ENCODE measurements at regions of chr3 and their contacts with region 1.

Region 1: GRCh38 chr3:33787328-33788009 is 11.0 kb upstream of the PDCD6IP start:
- DNase-seq: peak; percentile 58
- H3K4me3 ChIP-seq: no peak overlapping the region
- H3K27ac ChIP-seq: no peak overlapping the region
- H3K4me1 ChIP-seq: peaks cover 31% of the 10 kb centered on the region
- H3K27me3 ChIP-seq: no peaks in the 10 kb centered on the region
- CTCF ChIP-seq: peak; percentile 83 to 94

Region 2: DNA sequence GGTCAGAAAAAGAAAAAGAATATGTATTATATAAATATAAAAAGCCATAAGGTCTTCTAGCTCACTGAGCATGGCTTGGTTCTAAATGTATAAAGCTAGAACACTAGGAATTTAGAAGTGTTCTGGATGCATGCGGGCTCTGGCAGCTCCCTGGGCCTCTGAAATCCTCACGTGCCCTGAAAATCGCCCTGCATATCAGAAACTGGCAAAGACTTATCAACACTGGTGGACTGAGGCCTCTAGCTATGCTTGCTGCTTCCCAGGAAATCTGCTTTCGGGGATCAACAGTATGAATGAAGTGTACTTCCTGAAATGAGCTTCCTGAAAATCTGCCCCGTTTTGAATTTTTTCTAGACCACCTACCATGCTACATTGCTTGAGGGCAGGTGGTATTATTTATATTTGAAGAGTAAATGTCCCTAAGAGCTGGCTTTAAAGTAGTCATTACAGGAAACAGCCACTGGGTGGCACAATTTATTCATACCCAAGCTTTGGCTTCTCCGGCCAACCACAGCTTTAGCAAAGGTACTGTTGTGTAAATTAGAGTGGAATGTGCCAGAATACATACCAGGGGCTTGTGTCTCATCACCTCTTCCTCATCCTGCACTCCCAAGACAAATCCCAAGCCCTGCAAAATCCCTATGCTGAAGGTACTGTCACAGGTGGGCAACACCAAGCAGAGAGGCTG is 656.0 kb before region 1 on chr3:
- CTCF ChIA-PET with region 1: interaction called, 9 read pairs
- dilution Hi-C with region 1: loop called (anchors 25 kb)
- in situ Hi-C with region 1: no loop called
- intact Hi-C with region 1: loop called (anchors 5 kb)
- DNase-seq: peak; percentile 52
- H3K4me3 ChIP-seq: no peak overlapping the region
- H3K27ac ChIP-seq: no peak overlapping the region
- H3K4me1 ChIP-seq: no peaks in the 10 kb centered on the region
- H3K27me3 ChIP-seq: no peaks in the 10 kb centered on the region
- CTCF ChIP-seq: peak; percentile 52 to 71

Region 3: DNA sequence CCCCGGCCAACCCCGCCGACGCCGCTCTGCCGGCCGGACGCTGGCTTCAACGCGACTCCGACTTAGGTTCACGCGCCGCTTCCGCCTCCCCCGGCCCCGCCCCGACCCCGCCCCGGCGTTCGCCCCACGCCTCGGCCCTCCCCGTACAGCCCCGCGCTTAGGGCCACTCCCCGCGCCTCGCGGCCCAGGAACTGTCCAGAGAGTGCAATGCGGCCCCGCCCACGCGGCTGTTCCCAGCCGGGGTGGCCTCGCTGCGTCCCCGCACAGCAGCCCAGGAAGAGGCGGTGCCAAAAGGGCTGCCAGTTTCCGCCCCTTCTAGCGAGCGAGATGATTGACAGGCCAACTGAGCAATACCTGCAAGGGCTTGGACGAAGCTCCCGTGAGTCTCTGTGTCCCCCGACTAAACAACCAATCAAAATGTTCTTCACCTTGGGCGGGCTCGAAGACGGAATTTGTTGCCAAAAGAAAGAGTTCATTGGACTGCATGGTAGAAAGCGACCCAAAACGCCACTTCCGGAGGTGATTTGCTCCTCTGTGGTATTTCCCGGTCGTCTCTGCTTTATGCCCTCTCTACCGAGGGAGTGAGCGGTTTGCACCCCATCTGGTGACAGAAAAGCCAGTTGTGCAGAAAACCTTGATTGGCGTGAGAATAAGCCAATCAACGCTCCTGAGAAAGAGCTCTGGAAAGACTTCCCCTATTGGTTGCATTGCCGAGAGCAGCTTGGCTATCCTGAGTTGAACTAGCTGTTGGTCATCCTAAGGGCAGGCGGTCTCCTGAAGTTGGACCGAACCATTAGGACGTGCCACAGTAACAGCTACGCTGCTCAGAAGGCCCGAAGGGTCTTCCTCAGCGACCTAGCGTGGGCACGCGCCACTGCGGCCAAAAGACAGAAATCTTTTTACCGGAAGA is 346.9 kb before region 1 on chr3 and contains the start of gene UBP1:
- CTCF ChIA-PET with region 1: no interaction called
- dilution Hi-C with region 1: no loop called
- in situ Hi-C with region 1: loop called in 1 of 2 experiments (anchors 25 kb)
- intact Hi-C with region 1: loop called (anchors 5 kb)
- DNase-seq: peak; percentile 100
- H3K4me3 ChIP-seq: peak within 1 kb of the TSS; percentile 86 to 93 (median 88)
- H3K27ac ChIP-seq: peak within 1 kb of the TSS; percentile 83
- H3K4me1 ChIP-seq: peaks cover 19% of the 10 kb centered on the region
- H3K27me3 ChIP-seq: no peaks in the 10 kb centered on the region
- CTCF ChIP-seq: no peak
- total RNA-seq, gene UBP1: 44.8 to 63.7 TPM

Region 4: GRCh38 chr3:33636125-33636850 is 151.2 kb before region 1 on chr3:
- CTCF ChIA-PET with region 1: interaction called, 6 read pairs
- dilution Hi-C with region 1: loop called (anchors 25 kb)
- in situ Hi-C with region 1: loop called (anchors 10 kb)
- intact Hi-C with region 1: loop called (anchors 1 kb)
- DNase-seq: peak; percentile 37
- H3K4me3 ChIP-seq: no peak overlapping the region
- H3K27ac ChIP-seq: no peak overlapping the region
- H3K4me1 ChIP-seq: no peaks in the 10 kb centered on the region
- H3K27me3 ChIP-seq: no peaks in the 10 kb centered on the region
- CTCF ChIP-seq: peak; percentile 45 to 61

Region 5: DNA sequence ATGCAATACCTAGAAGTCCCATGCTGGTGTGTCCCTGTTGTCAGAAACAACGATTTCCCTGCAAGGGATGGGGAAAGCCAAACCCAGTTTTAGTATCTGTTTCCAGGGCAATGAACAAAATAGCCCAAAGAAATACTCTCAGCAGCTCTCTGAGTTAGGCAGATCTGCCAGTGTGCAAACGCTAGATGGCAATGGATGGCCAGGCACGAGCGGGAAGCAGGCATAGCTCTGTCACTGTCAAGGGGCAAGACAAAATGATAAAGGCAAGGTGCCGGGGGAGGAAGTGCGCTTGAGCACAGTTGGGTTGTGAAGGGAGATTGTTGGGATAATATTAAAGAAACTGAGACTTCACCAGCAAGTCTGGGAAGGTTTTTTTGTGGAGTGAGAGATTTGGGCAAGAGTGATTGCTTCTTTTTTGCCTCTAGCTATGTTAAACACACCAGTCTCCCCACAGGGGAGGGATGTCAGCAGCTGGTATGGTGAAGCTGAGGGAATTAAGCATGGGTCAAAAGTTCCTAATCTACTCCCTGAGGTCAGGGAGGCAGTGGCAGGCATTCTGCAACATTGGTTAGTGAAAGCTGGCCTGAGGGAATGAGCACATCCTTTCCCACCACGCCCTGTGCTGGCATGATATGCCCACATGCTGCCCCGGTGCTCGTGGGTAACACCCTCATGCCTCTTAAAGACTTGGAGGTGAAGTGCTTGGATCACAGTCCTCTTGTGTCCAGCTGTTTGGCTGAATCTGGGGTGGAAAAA is 128.5 kb after region 1 on chr3:
- CTCF ChIA-PET with region 1: no interaction called
- dilution Hi-C with region 1: no loop called
- in situ Hi-C with region 1: no loop called
- intact Hi-C with region 1: no loop called
- DNase-seq: peak; percentile 43
- H3K4me3 ChIP-seq: no peak overlapping the region
- H3K27ac ChIP-seq: no peak overlapping the region
- H3K4me1 ChIP-seq: peaks cover 27% of the 10 kb centered on the region
- H3K27me3 ChIP-seq: no peaks in the 10 kb centered on the region
- CTCF ChIP-seq: peak; percentile 38 to 49

Region 6: DNA sequence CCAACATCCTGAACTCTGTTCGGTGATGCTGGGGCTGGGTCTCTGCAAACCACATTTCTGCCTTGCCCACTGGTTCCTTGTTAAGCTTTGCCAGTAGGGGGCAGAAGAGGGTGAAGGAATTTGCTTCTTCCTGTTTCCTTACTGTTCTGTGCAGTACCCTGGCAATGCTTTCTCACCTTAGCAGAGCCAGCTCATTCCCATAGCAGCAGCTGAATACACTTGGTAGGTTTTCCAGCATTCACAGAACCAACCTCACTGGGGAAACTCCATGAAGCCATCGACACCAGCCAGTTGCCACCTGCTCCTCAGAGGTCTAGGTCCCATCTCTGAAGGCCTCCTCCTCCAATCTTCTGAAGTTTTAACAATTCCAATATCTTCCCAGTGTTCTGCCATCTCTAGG is 319.4 kb after region 1 on chr3:
- CTCF ChIA-PET with region 1: no interaction called
- dilution Hi-C with region 1: no loop called
- in situ Hi-C with region 1: no loop called
- intact Hi-C with region 1: no loop called
- DNase-seq: peak; percentile 2
- H3K4me3 ChIP-seq: no peak overlapping the region
- H3K27ac ChIP-seq: no peak overlapping the region
- H3K4me1 ChIP-seq: no peaks in the 10 kb centered on the region
- H3K27me3 ChIP-seq: no peaks in the 10 kb centered on the region
- CTCF ChIP-seq: peak; percentile 35 to 48

Measured in mammary epithelial cell (primary cell).